Activated T-helper 1 cell treated with anti-CD3 and anti-CD28 coated beads, Interleukin-12 subunit alpha, Interleukin-12 subunit beta, Interleukin-2, Interleukin-4 antibody, amounts not matched to agents 30 ng/mL and 10 ng/mL and 1 ng/mL, durations not matched to agents 14 hours and 24 hours and 36 hours (primary cell): ENCODE measurements at regions of chr17 and their contacts with region 1.

Region 1: DNA sequence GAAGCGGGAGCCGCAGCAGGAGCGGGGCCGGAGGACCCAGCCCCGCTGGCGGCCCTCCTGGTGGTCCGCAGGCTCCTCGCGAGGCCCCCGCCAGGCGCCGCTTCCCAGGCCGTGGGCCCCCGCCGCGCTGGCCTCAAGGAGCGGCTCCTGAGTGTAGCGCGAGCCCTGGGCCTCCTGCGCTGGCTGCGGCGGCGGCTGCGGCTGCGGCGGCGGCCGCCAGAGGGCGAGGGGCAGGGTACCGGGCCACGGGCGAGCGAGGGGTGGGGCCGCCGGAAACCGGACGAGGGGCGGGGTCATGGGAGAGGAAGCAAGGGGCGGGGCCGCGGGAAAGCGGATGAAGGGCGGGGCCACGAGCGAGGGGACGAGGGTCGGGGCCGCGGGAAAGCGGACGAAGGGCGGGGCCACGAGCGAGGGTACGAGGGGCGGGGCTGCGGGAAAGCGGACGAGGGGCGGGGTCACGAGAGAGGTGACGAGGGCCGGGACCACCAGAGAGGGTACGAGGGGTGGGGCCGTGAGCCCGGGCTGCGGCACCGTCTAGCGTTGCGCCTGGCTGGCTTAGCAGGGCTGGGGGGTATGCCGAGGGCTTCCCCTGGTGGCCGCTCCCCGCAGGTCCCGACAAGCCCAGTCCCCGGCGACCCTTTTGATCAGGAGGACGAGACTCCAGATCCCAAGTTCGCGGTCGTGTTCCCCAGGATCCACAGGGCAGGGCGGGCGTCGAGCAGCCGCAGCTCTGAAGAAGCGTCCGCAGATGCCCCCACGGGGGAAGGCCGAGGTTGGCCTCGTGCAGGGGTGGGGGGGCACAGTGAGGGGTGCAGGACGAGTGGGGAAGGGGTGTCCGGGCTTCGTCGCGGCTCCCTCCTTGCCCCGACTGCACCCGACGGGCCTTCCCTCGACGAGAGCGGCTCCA is 1.7 kb downstream of the MYO15B start:
- DNase-seq: peak; percentile 88
- H3K4me3 Mint-ChIP-seq: peak overlapping the region; percentile 78
- H3K27ac Mint-ChIP-seq: peak overlapping the region; percentile 77
- H3K4me1 Mint-ChIP-seq: no peaks in the 10 kb centered on the region
- H3K27me3 Mint-ChIP-seq: peaks cover 17% of the 10 kb centered on the region

Region 2: DNA sequence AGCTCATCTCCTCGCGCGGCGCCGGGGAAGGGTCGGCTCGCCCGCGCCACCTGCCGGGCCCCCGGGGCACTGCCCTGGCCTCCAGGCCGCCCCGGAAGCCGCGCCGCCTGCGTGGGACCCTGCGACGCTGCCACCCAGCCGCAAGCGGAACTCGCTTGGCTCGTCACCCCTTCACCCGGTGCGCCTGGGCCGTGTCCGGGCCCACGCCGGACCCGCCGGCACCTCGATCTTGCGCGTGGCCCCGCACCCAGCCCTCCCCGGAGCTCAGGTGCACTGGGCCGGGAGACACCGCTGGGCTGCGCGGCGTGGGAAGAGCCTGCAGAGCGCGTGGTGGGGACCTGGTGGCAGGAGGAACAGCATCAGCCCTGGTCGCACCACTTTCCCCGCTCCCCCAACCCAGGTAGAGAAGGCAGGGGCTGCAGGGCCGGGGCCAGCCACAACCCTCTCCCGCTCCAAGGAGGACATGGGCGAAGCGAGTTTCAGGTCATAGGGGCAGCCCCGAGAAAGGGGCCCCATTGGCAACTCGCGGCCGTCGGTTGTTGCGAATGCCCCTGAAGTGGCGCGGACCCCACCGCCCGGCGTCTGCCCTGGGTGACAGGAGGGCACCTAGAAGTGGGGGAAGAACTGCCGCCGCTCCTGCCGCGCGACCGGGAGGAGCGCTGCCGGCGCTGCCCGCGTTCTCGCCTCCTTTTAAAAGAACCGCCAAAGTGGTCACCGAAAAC is 317.9 kb before region 1 on chr17:
- intact Hi-C with region 1: loop called (anchors 10 kb)
- DNase-seq: peak; percentile 90
- H3K4me3 Mint-ChIP-seq: peak overlapping the region; percentile 92
- H3K27ac Mint-ChIP-seq: peak overlapping the region; percentile 86
- H3K4me1 Mint-ChIP-seq: peaks cover 36% of the 10 kb centered on the region
- H3K27me3 Mint-ChIP-seq: no peaks in the 10 kb centered on the region

Region 3: GRCh38 chr17:75456417-75457046 is 132.7 kb before region 1 on chr17 and contains the start of gene TMEM94:
- intact Hi-C with region 1: loop called (anchors 2 kb)
- DNase-seq: peak; percentile 89
- H3K4me3 Mint-ChIP-seq: peak within 1 kb of the TSS; percentile 92
- H3K27ac Mint-ChIP-seq: peak within 1 kb of the TSS; percentile 84
- H3K4me1 Mint-ChIP-seq: peaks cover 35% of the 10 kb centered on the region
- H3K27me3 Mint-ChIP-seq: no peaks in the 10 kb centered on the region
- total RNA-seq, gene TMEM94: 67.0 and 70.4 TPM in 2 replicates

Region 4: GRCh38 chr17:75524953-75525719 is 64.1 kb before region 1 on chr17 and contains the start of gene LLGL2:
- intact Hi-C with region 1: loop called (anchors 1 kb)
- DNase-seq: peak; percentile 81
- H3K4me3 Mint-ChIP-seq: peak within 1 kb of the TSS; percentile 69
- H3K27ac Mint-ChIP-seq: no peak within 1 kb of the TSS
- H3K4me1 Mint-ChIP-seq: peaks cover 6% of the 10 kb centered on the region
- H3K27me3 Mint-ChIP-seq: peaks cover 10% of the 10 kb centered on the region
- total RNA-seq, gene LLGL2: 7.1 and 8.2 TPM in 2 replicates

Region 5: DNA sequence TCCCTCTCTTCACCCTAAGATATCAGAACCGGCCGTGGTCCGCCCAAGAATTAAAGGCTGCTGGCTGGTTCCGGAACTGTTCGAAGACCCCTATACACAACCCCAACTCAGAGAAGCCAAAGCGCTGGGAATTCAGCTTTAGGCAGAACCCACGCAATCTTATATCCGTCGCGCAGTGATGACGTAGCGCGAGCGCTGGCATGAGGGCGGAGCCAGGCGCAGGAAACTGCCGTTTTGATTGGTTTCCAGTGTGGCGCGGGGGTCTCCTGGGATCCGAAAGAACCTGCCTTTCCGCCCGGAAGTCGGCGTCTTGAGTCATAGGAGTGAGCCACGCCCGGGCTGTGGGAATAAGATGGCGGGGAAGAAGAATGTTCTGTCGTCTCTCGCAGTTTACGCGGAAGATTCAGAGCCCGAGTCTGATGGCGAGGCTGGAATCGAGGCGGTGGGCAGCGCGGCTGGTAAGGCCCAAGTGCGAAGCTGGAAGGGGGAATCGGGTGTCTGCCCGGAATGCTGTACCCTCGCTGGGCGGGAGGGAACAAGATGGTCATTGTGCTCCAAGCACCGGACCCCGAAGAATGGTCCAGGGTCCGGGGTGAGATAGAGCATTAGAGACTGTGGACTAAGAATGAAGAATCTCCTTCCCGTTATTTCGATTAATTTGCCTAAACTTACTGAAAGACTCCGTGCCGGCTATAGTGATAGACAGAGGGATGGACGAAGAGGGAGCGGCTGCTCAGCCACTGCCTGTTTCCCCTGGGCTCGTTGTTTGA is 77.9 kb after region 1 on chr17 and contains the starts of genes RECQL5 and SAP30BP:
- intact Hi-C with region 1: loop called (anchors 1 kb)
- DNase-seq: peak; percentile 98
- H3K4me3 Mint-ChIP-seq: peak within 1 kb of the TSS; percentile 79
- H3K27ac Mint-ChIP-seq: peak within 1 kb of the TSS; percentile 71
- H3K4me1 Mint-ChIP-seq: peaks cover 11% of the 10 kb centered on the region
- H3K27me3 Mint-ChIP-seq: no peaks in the 10 kb centered on the region
- total RNA-seq, gene RECQL5: 29.9 and 34.1 TPM in 2 replicates
- total RNA-seq, gene SAP30BP: 113 and 117 TPM in 2 replicates